ENCODE measurements at regions of chr17 and their contacts with region 1.

Region 1: GRCh38 chr17:57875309-57876115 is 25.7 kb upstream of the MRPS23 start:
- H3K4me3 ChIP-seq: no peak overlapping the region
- H3K27ac ChIP-seq: peak overlapping the region; percentile 87
- H3K4me1 ChIP-seq: peaks cover 21% of the 10 kb centered on the region
- CTCF ChIP-seq: peak; percentile 65

Region 2: DNA sequence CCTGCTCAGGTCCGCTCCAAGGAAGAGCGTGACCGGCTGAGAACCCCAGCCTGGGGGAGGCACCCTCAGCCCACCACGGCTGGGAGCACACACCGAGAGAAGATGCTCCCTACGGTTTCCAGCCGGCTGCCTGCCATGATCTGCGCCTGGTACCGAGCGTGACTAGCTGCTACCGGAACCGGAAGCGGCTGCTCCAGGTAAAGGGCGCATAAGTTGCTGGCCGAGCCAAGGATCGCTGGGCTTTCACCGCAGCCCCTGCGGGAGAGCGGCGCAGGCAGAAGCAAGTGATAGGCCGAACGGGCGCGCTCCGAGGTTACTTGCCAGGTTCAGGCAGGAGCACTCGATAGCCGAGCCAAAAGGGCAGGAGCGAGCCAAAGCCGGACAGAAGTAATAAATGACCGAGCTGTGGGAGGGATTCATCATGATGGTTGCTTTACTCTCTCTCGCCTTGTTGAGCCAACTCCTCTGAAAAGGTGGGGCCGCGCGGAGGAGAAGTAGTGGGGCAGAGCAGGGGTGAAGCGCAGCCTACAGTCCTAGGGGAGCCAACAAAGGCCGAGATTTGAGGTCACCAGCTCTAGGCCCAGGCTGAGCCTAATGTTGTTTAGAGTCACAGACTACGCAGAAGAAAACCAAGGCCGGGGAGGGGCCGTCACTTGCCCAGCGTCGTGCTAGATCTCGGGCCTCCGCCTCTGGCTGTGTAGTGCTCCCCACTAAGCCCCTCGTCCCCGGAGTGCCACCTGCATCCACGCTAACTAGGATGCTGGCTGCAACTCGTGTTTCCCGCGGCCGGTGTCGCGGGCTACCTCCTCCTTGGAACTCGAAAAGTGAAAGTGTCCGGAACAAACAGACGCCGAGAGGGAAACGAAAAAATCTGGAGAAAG is 25.4 kb before region 1 on chr17 and contains the start of gene MRPS23:
- CTCF ChIA-PET with region 1: interaction called, 78 read pairs
- POLR2A ChIA-PET with region 1: interaction called, 17 read pairs
- H3K4me3 ChIP-seq: peak within 1 kb of the TSS; percentile 99
- H3K27ac ChIP-seq: peak within 1 kb of the TSS; percentile 84
- H3K4me1 ChIP-seq: peaks cover 17% of the 10 kb centered on the region
- CTCF ChIP-seq: no peak

Measured in HEK293 (cell line).